AG04449 (cell line): ENCODE measurements at regions of chr13 and their contacts with region 1.

Region 1: DNA sequence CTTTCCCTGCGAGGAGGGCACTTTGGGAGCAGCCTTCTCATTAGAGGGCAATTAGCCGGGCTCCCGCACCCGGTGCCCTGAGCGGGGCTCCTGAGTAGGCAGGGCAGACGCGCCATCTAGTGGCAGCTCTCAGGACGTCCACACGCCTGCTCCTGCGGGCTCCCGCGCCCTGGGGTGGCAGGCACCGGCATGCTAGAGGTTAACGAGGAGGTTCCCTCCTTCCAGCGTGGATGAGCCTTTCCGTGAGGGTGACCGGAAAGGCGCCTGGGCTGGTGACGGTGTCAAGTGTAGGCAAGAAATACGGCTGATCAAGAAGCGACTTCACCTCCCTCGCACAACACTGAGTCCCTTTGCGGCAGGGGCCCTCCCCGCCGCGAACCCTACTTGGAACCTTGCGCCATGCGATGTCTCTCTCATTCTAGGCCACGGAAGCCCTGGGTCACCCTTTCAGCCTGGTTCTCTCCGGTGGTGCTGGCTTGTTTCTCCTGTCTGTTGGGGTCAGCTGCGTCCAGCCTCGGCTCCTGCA is 67.7 kb downstream of the ALOX5AP start:
- DNase-seq: no peak
- H3K4me3 ChIP-seq: peak overlapping the region; percentile 35
- CTCF ChIP-seq: peak; percentile 96

Region 2: GRCh38 chr13:30593001-30593400 is 210.0 kb before region 1 on chr13:
- CTCF ChIA-PET with region 1: no interaction called
- POLR2A ChIA-PET with region 1: no interaction called
- DNase-seq: no peak
- H3K4me3 ChIP-seq: no peak overlapping the region
- CTCF ChIP-seq: no peak

Region 3: DNA sequence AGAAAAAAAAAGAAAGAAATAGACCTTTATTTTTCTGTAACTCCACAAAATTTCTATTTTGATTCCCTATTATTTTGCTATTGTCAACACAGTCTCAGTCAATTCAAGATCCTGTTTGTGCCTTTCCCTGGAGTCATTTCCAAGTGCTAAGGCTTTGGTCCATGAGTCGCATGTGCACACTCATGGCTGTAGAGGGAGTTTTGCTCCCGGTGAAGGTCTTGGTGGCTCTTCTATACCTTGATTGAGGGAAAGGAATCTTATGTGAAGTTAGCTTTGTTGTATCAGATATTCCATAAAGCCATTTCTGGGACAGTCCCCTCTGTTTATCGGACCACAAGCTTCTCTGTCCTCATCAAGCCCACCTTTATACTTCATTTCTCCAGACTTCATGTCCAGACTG is 126.3 kb before region 1 on chr13:
- CTCF ChIA-PET with region 1: interaction called, 28 read pairs
- POLR2A ChIA-PET with region 1: no interaction called
- DNase-seq: no peak
- H3K4me3 ChIP-seq: no peak overlapping the region
- CTCF ChIP-seq: peak; percentile 44

Region 4: GRCh38 chr13:30681843-30682242 is 121.2 kb before region 1 on chr13:
- CTCF ChIA-PET with region 1: interaction called, 28 read pairs
- POLR2A ChIA-PET with region 1: no interaction called
- DNase-seq: peak; percentile 34
- H3K4me3 ChIP-seq: no peak overlapping the region
- CTCF ChIP-seq: no peak

Region 5: DNA sequence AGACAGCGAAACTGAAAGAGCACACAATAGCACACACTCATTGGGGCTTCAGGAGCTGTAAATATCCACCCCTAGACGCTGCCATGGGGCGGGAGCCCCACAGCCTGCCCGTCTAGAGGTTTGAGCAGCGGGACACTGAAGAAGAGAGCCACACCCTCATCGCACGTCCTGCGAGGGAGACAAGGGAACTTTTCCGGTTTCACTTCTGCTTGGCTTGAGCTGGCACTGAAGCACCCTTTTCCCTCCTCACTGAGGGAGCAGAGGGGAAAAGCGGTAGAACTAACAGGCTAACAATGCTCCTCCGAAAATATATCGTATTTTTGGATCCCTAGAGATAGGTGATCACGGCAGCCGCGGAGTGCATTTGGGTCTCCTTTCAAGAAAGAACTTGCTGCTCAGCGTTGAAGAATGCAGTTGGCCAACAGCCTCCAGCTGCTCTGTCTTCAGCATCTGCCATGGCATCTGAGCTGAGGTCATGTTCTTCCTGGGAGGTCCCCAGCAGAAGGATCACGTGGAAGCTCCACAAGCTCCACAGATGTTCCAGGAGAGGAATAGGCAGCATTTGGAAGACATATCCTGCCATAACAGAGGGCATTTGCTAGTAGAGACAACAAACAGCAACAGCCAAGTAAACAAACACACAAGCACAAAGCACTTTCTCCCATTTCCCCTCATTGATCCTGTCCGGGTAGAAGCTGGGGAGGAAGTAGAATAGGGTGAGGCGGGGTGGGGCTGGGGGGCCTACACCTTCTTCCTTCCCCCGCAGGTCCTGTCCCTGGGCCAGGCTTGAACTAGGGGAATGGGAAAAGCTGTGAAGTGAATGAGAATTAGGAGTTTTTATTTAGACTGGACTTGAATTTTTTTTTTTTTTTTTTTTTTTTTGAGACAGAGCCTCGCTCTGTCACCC is 112.5 kb before region 1 on chr13:
- CTCF ChIA-PET with region 1: interaction called, 11 read pairs
- POLR2A ChIA-PET with region 1: no interaction called
- DNase-seq: peak; percentile 90
- H3K4me3 ChIP-seq: peak overlapping the region; percentile 62
- CTCF ChIP-seq: no peak

Region 6: DNA sequence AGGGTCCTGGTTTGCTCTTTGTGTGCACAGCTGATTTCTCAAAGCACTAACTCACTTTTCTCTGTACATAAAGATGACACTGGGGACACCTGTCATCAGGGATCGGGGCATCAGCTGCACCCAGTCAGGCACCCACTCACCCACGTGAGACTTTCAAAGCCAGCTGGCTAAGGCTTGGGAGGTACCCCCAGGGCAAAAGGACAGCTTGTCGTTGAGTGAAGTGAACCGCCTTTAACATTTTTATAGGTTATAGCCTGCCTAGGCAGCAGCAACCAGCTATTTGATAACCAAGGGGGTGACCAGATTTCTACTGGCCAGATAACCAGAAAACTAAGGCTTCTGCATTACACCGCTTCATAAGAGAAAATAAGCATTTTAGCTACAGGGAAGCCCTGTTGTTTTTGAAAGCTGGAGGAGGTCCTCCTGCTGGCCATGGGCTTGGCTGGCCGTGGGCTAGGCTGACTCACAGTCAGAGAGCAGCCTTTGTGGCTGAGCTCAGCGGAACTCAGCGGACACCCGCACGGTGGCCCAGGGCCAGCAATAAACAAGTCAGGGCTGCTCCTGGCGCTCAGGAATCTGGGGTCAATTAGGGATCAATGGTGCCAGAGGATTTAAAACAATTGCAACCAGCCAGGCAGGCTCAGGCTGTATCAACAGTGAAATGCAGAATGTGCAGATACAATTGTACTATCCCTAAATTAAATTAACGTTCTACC is 10.6 kb before region 1 on chr13:
- CTCF ChIA-PET with region 1: interaction called, 30 read pairs
- POLR2A ChIA-PET with region 1: no interaction called
- DNase-seq: peak; percentile 69
- H3K4me3 ChIP-seq: no peak overlapping the region
- CTCF ChIP-seq: peak; percentile 68

Region 7: GRCh38 chr13:31242916-31243315 is 439.9 kb after region 1 on chr13:
- CTCF ChIA-PET with region 1: no interaction called
- POLR2A ChIA-PET with region 1: no interaction called
- DNase-seq: no peak
- H3K4me3 ChIP-seq: no peak overlapping the region
- CTCF ChIP-seq: no peak